ENCODE measurements at regions of chr18 and their contacts with region 1.

Region 1: GRCh38 chr18:45197526-45197970 is 417.7 kb upstream of the SLC14A2 start:
- DNase-seq: peak; percentile 74
- ATAC-seq: peak; percentile 96
- H3K4me3 Mint-ChIP-seq: no peak overlapping the region
- H3K27ac Mint-ChIP-seq: peak overlapping the region; percentile 60
- H3K4me1 Mint-ChIP-seq: peaks cover 35% of the 10 kb centered on the region
- H3K27me3 Mint-ChIP-seq: peaks cover 7% of the 10 kb centered on the region

Region 2: DNA sequence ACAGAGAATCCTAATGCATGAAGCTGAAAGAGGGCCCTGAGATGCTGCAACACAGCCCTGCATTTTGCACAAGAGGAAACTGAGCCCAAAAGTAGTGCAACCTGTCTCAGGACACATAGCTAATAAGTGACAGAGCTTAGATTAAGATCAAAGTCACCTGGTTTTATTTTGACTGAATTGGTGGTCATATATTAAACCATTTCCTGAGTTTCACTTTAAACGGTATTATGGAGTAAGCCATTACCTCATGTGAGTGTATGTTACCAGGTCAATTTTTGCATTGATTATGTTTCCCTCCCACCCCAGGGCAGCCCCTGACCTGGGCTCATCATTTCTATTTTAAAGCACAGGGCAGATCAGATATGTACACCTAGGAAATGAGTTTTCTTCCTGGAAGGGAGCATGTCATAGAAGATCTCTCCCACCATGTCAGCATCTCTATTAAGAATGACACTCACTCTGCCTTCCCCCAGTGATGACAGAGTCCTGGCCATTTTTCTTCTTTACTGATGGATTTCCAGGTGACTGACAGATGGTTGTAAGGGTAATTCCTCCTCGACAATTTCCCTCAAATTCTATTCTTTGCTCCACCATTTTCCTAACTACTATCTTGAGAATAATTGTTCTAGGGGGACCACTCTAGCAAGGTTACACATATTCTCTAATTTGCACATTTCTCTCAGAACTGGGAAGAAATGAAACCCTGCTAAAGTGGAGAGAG is 23.6 kb before region 1 on chr18:
- CTCF ChIA-PET with region 1: no interaction called
- DNase-seq: no peak
- ATAC-seq: peak; percentile 61
- H3K4me3 Mint-ChIP-seq: no peak overlapping the region
- H3K27ac Mint-ChIP-seq: no peak overlapping the region
- H3K4me1 Mint-ChIP-seq: peaks cover 17% of the 10 kb centered on the region
- H3K27me3 Mint-ChIP-seq: peaks cover 30% of the 10 kb centered on the region

Region 3: GRCh38 chr18:45212181-45213039 is 14.9 kb after region 1 on chr18:
- CTCF ChIA-PET with region 1: interaction called, 11 read pairs
- DNase-seq: peak; percentile 87
- ATAC-seq: peak; percentile 99
- H3K4me3 Mint-ChIP-seq: no peak overlapping the region
- H3K27ac Mint-ChIP-seq: no peak overlapping the region
- H3K4me1 Mint-ChIP-seq: no peaks in the 10 kb centered on the region
- H3K27me3 Mint-ChIP-seq: peaks cover 19% of the 10 kb centered on the region

Measured in activated CD8-positive, alpha-beta memory T cell treated with anti-CD3 and anti-CD28 coated beads, Interleukin-2, amount 10 ng/mL, durations not matched to agents 7 days and 5 days (primary cell).